ENCODE measurements at regions of chr1 and their contacts with region 1.

Region 1: DNA sequence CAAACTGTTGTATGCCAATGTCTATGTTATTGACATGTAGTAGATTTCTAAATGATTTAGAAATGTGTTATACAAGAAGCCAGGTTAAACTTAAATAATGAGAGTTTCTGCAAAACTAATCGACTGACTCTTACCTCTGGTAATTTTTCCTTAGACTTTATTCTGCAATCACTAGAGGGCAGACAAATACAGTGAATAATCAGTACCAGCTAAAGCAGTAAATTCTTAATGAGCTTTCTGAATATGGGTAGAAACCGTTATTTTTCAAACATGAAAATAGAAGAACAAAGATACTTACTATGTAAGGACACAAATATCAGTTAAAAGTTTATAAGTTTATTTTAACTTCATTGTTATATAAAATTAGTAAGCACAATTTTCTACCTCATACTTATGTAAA is 97.9 kb upstream of the RGS1 start:
- DNase-seq: no peak
- H3K4me3 Mint-ChIP-seq: no peak overlapping the region
- H3K27ac Mint-ChIP-seq: no peak overlapping the region
- H3K4me1 Mint-ChIP-seq: no peaks in the 10 kb centered on the region
- H3K27me3 Mint-ChIP-seq: peaks cover 12% of the 10 kb centered on the region

Region 2: GRCh38 chr1:192445848-192446489 is 31.7 kb before region 1 on chr1:
- intact Hi-C with region 1: no loop called
- DNase-seq: peak; percentile 9
- H3K4me3 Mint-ChIP-seq: no peak overlapping the region
- H3K27ac Mint-ChIP-seq: no peak overlapping the region
- H3K4me1 Mint-ChIP-seq: no peaks in the 10 kb centered on the region
- H3K27me3 Mint-ChIP-seq: peaks cover 12% of the 10 kb centered on the region

Region 3: DNA sequence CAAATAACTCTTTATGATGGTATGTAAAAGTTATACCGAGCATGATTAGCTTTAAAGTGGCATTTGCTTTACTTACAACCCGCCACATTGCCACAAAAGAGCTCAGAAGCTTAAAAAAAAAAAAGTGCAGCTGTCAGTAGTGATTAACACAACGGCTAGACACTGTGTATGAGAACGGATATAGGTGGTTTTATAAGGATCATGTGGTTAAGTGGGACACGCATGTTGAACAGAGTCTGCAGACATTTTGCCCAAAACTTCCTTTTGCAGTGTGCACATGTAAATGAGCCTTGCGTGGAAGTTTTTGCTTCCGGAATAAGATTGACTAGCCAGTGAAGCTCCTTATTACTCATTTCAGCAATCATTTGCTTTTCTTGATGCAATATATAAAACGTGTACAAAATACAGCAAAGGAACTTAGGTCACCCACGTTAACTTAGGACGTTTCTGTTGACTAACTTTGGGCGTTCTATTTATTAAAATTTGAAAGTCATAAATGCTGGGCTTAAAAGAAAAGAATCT is 39.2 kb after region 1 on chr1:
- intact Hi-C with region 1: loop called (anchors 2 kb)
- DNase-seq: peak; percentile 67
- H3K4me3 Mint-ChIP-seq: peak overlapping the region; percentile 79
- H3K27ac Mint-ChIP-seq: peak overlapping the region; percentile 92
- H3K4me1 Mint-ChIP-seq: peaks cover 58% of the 10 kb centered on the region
- H3K27me3 Mint-ChIP-seq: peaks cover 4% of the 10 kb centered on the region

Region 4: GRCh38 chr1:192609110-192610079 is 131.8 kb after region 1 on chr1:
- intact Hi-C with region 1: loop called (anchors 1 kb)
- DNase-seq: peak; percentile 36
- H3K4me3 Mint-ChIP-seq: no peak overlapping the region
- H3K27ac Mint-ChIP-seq: peak overlapping the region; percentile 3
- H3K4me1 Mint-ChIP-seq: peaks cover 14% of the 10 kb centered on the region
- H3K27me3 Mint-ChIP-seq: peaks cover 4% of the 10 kb centered on the region

Region 5: DNA sequence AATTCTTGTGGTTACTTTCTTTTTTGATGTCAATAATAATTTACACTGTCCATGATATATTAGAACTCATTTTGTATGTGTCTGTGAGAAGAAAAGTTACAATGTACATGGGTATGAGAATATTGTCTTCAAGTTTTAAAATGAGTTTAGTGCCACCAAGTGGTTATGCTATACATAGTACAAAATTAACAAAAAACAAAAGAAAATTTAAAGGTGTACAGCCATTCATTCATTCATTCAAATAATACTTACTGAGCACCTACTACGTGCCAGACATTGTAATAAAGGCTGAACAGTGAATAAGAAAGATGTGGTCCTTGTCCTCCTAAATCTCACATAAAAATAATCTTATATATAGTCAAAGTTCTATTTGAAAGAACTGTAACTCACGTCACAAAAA is 553.8 kb after region 1 on chr1:
- intact Hi-C with region 1: loop called (anchors 1 kb)
- DNase-seq: no peak
- H3K4me3 Mint-ChIP-seq: no peak overlapping the region
- H3K27ac Mint-ChIP-seq: no peak overlapping the region
- H3K4me1 Mint-ChIP-seq: peaks cover 6% of the 10 kb centered on the region
- H3K27me3 Mint-ChIP-seq: no peaks in the 10 kb centered on the region

Region 6: DNA sequence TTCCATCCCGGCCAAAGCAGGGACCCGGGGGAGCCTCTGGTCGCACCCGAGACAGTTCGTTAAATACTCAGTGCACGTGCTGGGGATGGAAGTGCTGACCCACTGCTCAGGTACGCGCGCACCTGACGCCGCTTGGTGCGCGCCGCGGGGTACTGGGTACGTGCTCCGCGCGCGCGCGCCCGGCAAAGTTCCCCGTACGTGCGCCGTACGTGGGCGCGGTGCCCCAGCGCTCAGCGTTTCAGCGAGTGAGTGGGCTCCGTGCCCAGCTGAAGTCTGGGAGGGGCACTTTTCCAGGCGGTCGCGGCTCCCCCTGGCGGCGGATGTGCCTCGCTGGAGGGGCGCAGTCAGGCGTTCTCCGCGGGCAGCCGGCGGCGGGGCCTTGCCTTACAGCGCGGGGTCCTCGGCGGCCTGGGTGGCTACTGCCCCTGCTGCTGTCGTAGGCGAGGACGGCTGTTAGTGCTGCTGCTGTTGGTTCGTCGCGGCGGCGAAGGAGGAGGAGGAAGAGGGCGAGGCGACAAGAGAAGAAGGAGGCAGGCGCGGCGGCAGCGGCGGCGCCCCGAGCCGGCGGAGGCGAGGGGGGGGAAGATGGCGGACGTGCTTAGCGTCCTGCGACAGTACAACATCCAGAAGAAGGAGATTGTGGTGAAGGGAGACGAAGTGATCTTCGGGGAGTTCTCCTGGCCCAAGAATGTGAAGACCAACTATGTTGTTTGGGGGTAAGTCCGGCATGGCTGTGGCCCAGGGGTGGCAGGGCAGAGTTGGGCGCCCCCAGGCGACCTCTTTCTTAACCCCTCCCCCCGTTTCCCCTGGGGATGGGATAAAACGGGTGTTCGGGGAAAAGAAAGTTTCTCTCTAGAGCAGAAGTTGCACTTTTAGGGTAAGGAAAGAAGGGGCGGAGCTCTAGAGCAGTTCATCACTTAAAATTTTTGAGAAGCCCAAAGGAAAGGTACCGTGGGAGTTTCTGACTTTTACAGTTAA is 644.3 kb after region 1 on chr1 and contains the start of gene CDC73:
- intact Hi-C with region 1: loop called (anchors 5 kb)
- DNase-seq: peak; percentile 97
- H3K4me3 Mint-ChIP-seq: peak within 1 kb of the TSS; percentile 92
- H3K27ac Mint-ChIP-seq: peak within 1 kb of the TSS; percentile 88
- H3K4me1 Mint-ChIP-seq: peaks cover 62% of the 10 kb centered on the region
- H3K27me3 Mint-ChIP-seq: peaks cover 15% of the 10 kb centered on the region
- total RNA-seq, gene CDC73: 56.1 and 57.3 TPM in 2 replicates

Measured in activated T-helper 1 cell treated with anti-CD3 and anti-CD28 coated beads, Interleukin-12 subunit alpha, Interleukin-12 subunit beta, Interleukin-2, Interleukin-4 antibody, amounts not matched to agents 30 ng/mL and 10 ng/mL and 1 ng/mL, durations not matched to agents 14 hours and 24 hours and 36 hours (primary cell).